A549 (cell line): ENCODE measurements at regions of chr12 and their contacts with region 1.

Region 1: DNA sequence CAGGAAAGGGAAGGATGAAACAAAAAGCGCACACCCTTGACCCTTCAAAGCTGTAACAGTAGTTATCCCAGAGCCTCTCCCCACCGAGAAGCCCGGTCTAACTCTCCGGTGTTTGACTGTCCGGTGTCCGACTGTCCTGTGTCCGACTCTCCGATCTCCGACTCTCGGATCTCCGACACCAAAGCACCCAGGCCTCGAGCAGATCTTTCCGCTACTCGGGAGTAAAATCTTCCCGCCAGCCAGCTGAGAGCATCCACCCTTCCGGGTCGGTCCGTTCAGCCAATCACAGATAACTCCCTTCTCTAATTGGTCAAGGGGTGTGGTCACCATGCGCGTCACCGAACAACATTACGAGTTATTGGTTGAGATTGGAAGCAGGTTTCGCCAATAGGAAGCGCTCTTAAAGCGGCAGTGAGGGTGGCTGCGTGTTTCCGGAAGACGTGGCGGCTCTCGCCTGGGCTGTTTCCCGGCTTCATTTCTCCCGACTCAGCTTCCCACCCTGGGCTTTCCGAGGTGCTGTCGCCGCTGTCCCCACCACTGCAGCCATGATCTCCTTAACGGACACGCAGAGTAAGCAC is at the starts of genes GOLT1B and RECQL:
- DNase-seq: peak; percentile 96 to 99
- ATAC-seq: peak; percentile 98
- H3K4me3 ChIP-seq: peak within 1 kb of the TSS; percentile 96
- H3K27ac ChIP-seq: peak within 1 kb of the TSS; percentile 93 to 94
- H3K4me1 ChIP-seq: peaks cover 31% of the 10 kb centered on the region
- CTCF ChIP-seq: no peak
- EP300 ChIP-seq: no peak
- POLR2A ChIP-seq: peak; percentile 46
- RAD21 ChIP-seq: no peak
- polyA plus RNA-seq, gene GOLT1B: 62.3 and 73.4 TPM in 2 replicates
- polyA plus RNA-seq, gene RECQL: 56.7 and 84.2 TPM in 2 replicates

Region 2: GRCh38 chr12:21527451-21528180 is 26.1 kb after region 1 on chr12:
- CTCF ChIA-PET with region 1: interaction called, 3 read pairs
- POLR2A ChIA-PET with region 1: interaction called, 18 read pairs
- DNase-seq: peak; percentile 70 to 75
- ATAC-seq: peak; percentile 94 to 95
- H3K4me3 ChIP-seq: peak overlapping the region; percentile 59
- H3K27ac ChIP-seq: peak overlapping the region; percentile 74 to 93
- H3K4me1 ChIP-seq: peaks cover 28% of the 10 kb centered on the region
- CTCF ChIP-seq: no peak
- EP300 ChIP-seq: no peak
- POLR2A ChIP-seq: peak; percentile 56
- RAD21 ChIP-seq: peak in 1 of 2 experiments; percentile 22; a peak in 2 of 5 replicates

Region 3: DNA sequence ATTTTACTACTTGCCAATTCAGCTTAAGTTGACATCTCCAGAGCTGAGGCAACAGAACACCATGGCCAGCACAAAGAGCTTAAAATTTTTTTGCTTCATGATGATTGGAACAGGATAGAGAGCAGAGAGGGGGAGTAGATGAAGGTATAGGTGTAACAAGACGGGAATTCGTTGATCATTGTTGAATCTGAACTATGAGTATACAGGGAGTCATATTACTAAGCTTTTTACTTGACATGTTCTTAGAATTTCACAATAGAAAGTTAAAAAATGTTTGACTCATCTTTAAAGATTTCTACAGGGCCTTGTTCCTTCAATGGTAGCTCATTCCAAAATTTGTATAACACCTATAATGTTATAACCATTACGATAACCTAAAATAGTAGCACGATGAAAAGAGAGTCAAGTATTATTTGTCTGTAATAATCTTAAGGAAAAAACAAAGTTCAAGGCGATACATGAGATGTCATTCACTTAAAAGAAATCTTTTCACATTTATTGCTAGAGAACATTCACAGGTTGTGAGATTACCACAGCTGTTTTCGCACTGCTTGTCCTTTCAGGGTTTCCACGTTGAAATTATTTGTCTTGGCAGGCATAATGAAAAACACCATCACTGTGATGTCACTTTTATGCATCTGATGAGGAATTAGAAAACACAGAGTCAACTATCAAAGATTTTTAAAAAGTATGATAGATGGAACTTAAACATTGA is 58.5 kb after region 1 on chr12:
- CTCF ChIA-PET with region 1: no interaction called
- POLR2A ChIA-PET with region 1: interaction called, 12 read pairs
- DNase-seq: peak; percentile 19 to 74
- ATAC-seq: peak; percentile 92 to 97
- H3K4me3 ChIP-seq: no peak overlapping the region
- H3K27ac ChIP-seq: peak overlapping the region; percentile 63 to 78; a peak in 5 of 6 replicates
- H3K4me1 ChIP-seq: peaks cover 54% of the 10 kb centered on the region
- CTCF ChIP-seq: no peak
- EP300 ChIP-seq: peak in 1 of 2 experiments; percentile 49; a peak in 2 of 5 replicates
- POLR2A ChIP-seq: no peak
- RAD21 ChIP-seq: no peak; a peak in 1 of 5 replicates

Region 4: GRCh38 chr12:21657326-21658077 is 156.0 kb after region 1 on chr12 and contains the start of gene LDHB:
- CTCF ChIA-PET with region 1: no interaction called
- POLR2A ChIA-PET with region 1: interaction called, 11 read pairs
- DNase-seq: peak; percentile 86 to 98
- ATAC-seq: peak; percentile 97 to 98
- H3K4me3 ChIP-seq: peak within 1 kb of the TSS; percentile 92
- H3K27ac ChIP-seq: peak within 1 kb of the TSS; percentile 97 to 98
- H3K4me1 ChIP-seq: peaks cover 34% of the 10 kb centered on the region
- CTCF ChIP-seq: no peak
- EP300 ChIP-seq: no peak
- POLR2A ChIP-seq: peak; percentile 90
- RAD21 ChIP-seq: no peak
- polyA plus RNA-seq, gene LDHB: 1,881 and 2,260 TPM in 2 replicates